Posterior vena cava (tissue), 2 donors: ENCODE measurements at regions of chr3 and their contacts with region 1.

Region 1: GRCh38 chr3:97821810-97822775 is at the start of gene CRYBG3:
- DNase-seq: peak; percentile 95
- total RNA-seq, gene CRYBG3: 21.6 to 21.8 TPM

Region 2: DNA sequence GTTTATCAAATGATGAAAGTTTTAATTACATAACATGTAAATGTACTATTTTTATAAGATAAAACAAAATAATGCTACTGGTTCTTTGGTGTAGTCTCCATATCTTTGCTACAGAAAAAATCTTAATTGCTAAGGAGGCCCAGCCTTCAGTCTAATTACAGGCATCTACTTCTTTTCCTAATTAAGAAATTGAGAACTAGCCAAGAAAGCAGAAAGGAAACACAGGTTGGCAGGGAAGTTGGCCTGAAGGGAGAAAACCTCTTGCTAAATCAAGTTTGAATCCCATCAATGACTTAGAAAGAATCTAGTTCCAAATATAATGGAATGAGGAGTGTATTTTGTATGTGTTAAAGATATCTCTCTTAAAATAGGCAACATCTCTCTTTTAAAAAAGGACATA is 269.9 kb before region 1 on chr3:
- intact Hi-C with region 1: no loop called
- DNase-seq: no peak

Region 3: GRCh38 chr3:97719156-97719821 is 102.8 kb before region 1 on chr3:
- intact Hi-C with region 1: no loop called
- DNase-seq: peak; percentile 84

Region 4: DNA sequence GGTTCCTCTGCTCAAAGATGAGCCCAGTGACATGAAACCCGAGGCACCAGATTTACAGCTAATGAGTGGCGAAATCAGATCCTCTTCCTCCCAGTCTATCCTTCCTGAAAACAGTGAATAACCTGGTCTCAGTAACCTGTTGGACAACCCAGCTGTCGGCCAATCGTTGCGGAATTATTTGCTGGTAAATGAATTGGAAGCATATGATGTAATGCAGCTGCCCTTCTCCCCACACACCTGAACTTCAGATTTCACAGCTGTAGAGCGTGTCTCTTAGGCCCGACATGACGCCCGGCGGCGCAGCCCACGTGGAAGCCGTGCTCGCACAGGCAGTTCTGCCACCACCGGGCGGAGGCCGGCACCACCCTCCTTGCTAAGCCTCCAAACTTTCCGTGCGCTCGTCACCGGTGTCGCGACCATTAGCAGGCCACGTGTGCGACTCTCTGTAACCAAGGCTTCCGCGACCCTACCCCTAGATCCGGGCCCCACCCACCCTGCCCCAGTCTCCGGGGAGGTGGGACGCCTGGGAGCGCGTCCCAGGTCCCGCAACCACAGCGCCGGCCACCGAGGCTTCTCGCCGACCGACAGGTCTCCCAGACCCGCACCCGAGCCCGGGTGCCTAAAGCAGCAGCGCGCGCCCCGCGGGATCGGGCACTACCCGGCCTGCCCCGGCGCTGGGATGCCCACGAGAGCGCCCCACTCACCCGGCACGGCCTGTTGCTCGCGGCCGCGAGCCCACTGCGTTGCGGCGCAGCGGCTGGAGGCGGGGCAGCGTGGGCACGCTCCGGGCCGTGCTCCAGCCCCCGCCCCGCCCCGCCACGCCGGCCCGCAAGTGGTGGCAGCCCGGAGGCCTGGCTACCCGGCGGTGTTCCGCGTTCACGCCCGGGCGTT is 149.8 kb after region 1 on chr3 and contains the start of gene RIOX2:
- intact Hi-C with region 1: loop called in 1 of 2 experiments (anchors 10 kb)
- DNase-seq: peak; percentile 93
- total RNA-seq, gene RIOX2: 17.1 to 20.0 TPM